Right cardiac atrium (tissue), 5 donors: ENCODE measurements at regions of chr17 and their contacts with region 1.

Region 1: GRCh38 chr17:64736804-64737492 is 74.8 kb upstream of the SMURF2 start:
- DNase-seq: peak in 1 of 3 donors; percentile 48
- ATAC-seq: peak in 1 of 2 donors; percentile 18
- H3K4me3 ChIP-seq: no peak overlapping the region
- H3K27ac ChIP-seq: no peak overlapping the region
- H3K4me1 ChIP-seq: peaks cover 11% of the 10 kb centered on the region
- H3K27me3 ChIP-seq: no peaks in the 10 kb centered on the region

Region 2: GRCh38 chr17:64679688-64680216 is 57.2 kb before region 1 on chr17:
- intact Hi-C with region 1: loop called in 1 of 4 experiments (anchors 10 kb)
- DNase-seq: peak in 2 of 3 donors; percentile 31 to 53
- ATAC-seq: peak; percentile 28 to 33
- H3K4me3 ChIP-seq: no peak overlapping the region
- H3K27ac ChIP-seq: no peak overlapping the region
- H3K4me1 ChIP-seq: no peaks in the 10 kb centered on the region
- H3K27me3 ChIP-seq: no peaks in the 10 kb centered on the region